Activated B cell treated with CpG ODN at 0.5 μM for 24 hours (primary cell): ENCODE measurements at regions of chr2 and their contacts with region 1.

Region 1: DNA sequence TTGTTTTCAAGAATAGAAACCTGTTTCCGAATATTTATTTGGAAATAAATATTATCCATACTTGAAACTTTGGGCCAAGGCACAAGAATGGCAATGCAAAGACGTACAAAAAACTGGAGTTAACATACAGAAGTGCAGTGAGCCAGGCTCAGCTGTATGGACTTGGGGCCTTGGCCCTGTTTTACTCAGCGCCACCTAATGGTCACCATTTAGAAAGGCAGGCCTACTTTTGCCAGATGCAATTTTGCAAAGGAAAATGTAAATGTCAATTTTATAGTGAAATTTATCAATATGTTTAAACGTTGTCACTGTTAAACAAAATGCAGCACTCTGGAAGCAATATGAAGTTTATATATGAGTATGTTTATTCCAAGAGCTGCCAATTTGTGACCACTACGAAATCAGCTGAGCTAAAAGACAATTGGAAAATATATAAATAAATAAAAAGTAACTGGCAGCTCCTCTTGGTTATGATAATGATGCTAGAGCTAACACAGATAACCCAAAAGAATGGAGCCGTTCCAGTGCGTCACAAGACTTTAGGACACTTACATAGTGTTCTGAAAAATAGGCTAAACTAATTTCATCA is 155.0 kb downstream of the ARHGAP15 start:
- DNase-seq: no peak
- ATAC-seq: peak; percentile 88
- H3K4me3 Mint-ChIP-seq: no peak overlapping the region
- H3K27ac Mint-ChIP-seq: no peak overlapping the region
- H3K4me1 Mint-ChIP-seq: peaks cover 11% of the 10 kb centered on the region
- H3K27me3 Mint-ChIP-seq: no peaks in the 10 kb centered on the region
- CTCF ChIP-seq: peak; percentile 72

Region 2: DNA sequence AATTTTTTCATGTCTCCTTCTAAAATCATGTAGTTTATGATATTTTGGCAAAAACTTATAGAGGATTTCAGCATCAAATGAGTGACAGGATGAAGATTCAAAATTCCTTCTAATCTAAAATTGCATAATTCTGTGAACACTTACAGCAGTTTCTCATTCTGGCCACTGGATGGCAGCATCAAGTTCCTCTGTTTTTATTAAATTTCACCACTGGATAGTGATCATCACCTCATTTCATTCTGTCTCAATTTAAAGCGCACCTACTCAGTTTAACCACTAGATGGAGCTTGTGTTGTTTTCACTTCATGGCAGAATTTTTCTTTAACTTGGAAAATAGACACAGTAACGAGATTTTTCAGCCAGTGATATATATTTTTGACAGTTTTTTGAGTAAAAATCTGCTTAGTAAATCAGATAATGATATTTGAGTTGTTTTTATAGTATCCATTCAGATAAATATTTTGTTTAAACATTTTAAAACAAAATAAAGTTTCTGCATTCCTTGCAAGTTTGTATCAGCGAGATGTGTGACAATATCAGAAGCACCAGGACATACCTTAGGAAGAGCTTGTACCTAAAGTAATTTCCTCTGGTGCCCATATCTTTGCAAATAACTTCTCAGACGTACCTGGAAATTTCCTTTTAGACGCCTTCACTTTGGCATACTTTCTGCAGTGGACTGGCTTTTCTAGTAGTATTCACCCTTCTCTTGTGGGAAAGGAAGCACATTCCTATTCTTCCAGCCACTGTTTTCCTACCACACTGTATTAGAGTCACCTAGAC is 249.7 kb before region 1 on chr2:
- CTCF ChIA-PET with region 1: interaction called, 14 read pairs
- POLR2A ChIA-PET with region 1: no interaction called
- intact Hi-C with region 1: loop called (anchors 1 kb)
- DNase-seq: no peak
- ATAC-seq: peak; percentile 99
- H3K4me3 Mint-ChIP-seq: no peak overlapping the region
- H3K27ac Mint-ChIP-seq: no peak overlapping the region
- H3K4me1 Mint-ChIP-seq: peaks cover 9% of the 10 kb centered on the region
- H3K27me3 Mint-ChIP-seq: no peaks in the 10 kb centered on the region
- CTCF ChIP-seq: peak; percentile 79

Region 3: GRCh38 chr2:143264851-143265250 is 19.3 kb before region 1 on chr2:
- CTCF ChIA-PET with region 1: interaction called, 14 read pairs
- POLR2A ChIA-PET with region 1: no interaction called
- intact Hi-C with region 1: loop called (anchors 2 kb)
- DNase-seq: no peak
- ATAC-seq: no peak
- H3K4me3 Mint-ChIP-seq: no peak overlapping the region
- H3K27ac Mint-ChIP-seq: no peak overlapping the region
- H3K4me1 Mint-ChIP-seq: peaks cover 28% of the 10 kb centered on the region
- H3K27me3 Mint-ChIP-seq: no peaks in the 10 kb centered on the region
- CTCF ChIP-seq: no peak

Region 4: DNA sequence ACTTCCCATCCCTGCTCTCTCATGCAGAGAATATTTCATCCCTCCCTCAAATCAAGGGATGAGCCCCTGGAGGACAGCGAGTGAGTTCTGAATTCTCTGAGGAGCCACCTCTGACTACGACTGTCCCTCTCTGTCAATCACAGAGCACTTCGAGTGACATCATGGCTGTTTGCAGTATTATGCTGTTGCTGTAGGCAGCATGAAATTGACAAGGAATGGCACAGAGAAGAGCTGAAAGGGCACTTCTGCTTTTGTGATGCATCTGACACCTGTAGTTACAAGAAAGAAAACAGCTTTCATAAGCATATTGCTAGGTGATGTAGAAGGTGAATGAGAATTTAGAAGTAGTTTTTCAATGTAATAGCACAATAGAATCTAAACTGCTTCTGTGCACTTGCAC is 11.9 kb after region 1 on chr2:
- CTCF ChIA-PET with region 1: interaction called, 15 read pairs
- POLR2A ChIA-PET with region 1: interaction called, 5 read pairs
- intact Hi-C with region 1: no loop called
- DNase-seq: no peak
- ATAC-seq: peak; percentile 71
- H3K4me3 Mint-ChIP-seq: no peak overlapping the region
- H3K27ac Mint-ChIP-seq: peak overlapping the region; percentile 73
- H3K4me1 Mint-ChIP-seq: peaks cover 12% of the 10 kb centered on the region
- H3K27me3 Mint-ChIP-seq: no peaks in the 10 kb centered on the region
- CTCF ChIP-seq: no peak